IMR-90 (cell line): ENCODE measurements at regions of chrX and their contacts with region 1.

Region 1: GRCh38 chrX:49043220-49043986 is at the start of gene TFE3:
- DNase-seq: peak; percentile 98
- ATAC-seq: peak; percentile 83
- H3K4me3 ChIP-seq: peak within 1 kb of the TSS; percentile 60
- H3K27ac ChIP-seq: peak within 1 kb of the TSS; percentile 98
- H3K4me1 ChIP-seq: peaks cover 12% of the 10 kb centered on the region
- H3K27me3 ChIP-seq: no peaks in the 10 kb centered on the region
- CTCF ChIP-seq: peak; percentile 76
- POLR2A ChIP-seq: peak; percentile 65; the same call in 1 of the 2 replicates
- RAD21 ChIP-seq: peak; percentile 69
- total RNA-seq, gene TFE3: 23.9 and 24.4 TPM in 2 replicates

Region 2: GRCh38 chrX:48835524-48836329 is 207.7 kb before region 1 on chrX and contains the start of gene PCSK1N:
- CTCF ChIA-PET with region 1: no interaction called
- POLR2A ChIA-PET with region 1: no interaction called
- dilution Hi-C with region 1: no loop called
- in situ Hi-C with region 1: no loop called
- intact Hi-C with region 1: no loop called
- DNase-seq: no peak
- ATAC-seq: no peak
- H3K4me3 ChIP-seq: no peak within 1 kb of the TSS
- H3K27ac ChIP-seq: no peak within 1 kb of the TSS
- H3K4me1 ChIP-seq: no peaks in the 10 kb centered on the region
- H3K27me3 ChIP-seq: peaks cover 34% of the 10 kb centered on the region
- CTCF ChIP-seq: no peak
- POLR2A ChIP-seq: no peak
- RAD21 ChIP-seq: no peak
- total RNA-seq, gene PCSK1N: not detected in 2 replicates

Region 3: GRCh38 chrX:48917139-48918001 is 126.0 kb before region 1 on chrX:
- CTCF ChIA-PET with region 1: interaction called, 3 read pairs
- POLR2A ChIA-PET with region 1: no interaction called
- dilution Hi-C with region 1: no loop called
- in situ Hi-C with region 1: no loop called
- intact Hi-C with region 1: loop called (anchors 5 kb)
- DNase-seq: peak; percentile 85
- ATAC-seq: peak; percentile 70
- H3K4me3 ChIP-seq: no peak overlapping the region
- H3K27ac ChIP-seq: no peak overlapping the region
- H3K4me1 ChIP-seq: peaks cover 3% of the 10 kb centered on the region; the same call in 1 of the 2 replicates
- H3K27me3 ChIP-seq: no peaks in the 10 kb centered on the region
- CTCF ChIP-seq: peak; percentile 91
- POLR2A ChIP-seq: no peak
- RAD21 ChIP-seq: peak; percentile 46

Region 4: GRCh38 chrX:48957827-48958634 is 85.4 kb before region 1 on chrX:
- CTCF ChIA-PET with region 1: interaction called, 3 read pairs
- POLR2A ChIA-PET with region 1: interaction called, 13 read pairs
- dilution Hi-C with region 1: no loop called
- in situ Hi-C with region 1: no loop called
- intact Hi-C with region 1: loop called (anchors 1 kb)
- DNase-seq: peak; percentile 98
- ATAC-seq: peak; percentile 89
- H3K4me3 ChIP-seq: peak overlapping the region; percentile 78
- H3K27ac ChIP-seq: peak overlapping the region; percentile 89
- H3K4me1 ChIP-seq: peaks cover 2% of the 10 kb centered on the region
- H3K27me3 ChIP-seq: no peaks in the 10 kb centered on the region
- CTCF ChIP-seq: no peak
- POLR2A ChIP-seq: peak; percentile 92
- RAD21 ChIP-seq: no peak

Region 5: GRCh38 chrX:48972220-48973167 is 70.9 kb before region 1 on chrX:
- CTCF ChIA-PET with region 1: no interaction called
- POLR2A ChIA-PET with region 1: no interaction called
- dilution Hi-C with region 1: no loop called
- in situ Hi-C with region 1: no loop called
- intact Hi-C with region 1: loop called (anchors 1 kb)
- DNase-seq: peak; percentile 41
- ATAC-seq: peak; percentile 65
- H3K4me3 ChIP-seq: peak overlapping the region; percentile 50
- H3K27ac ChIP-seq: 0 out of 2 replicates have a peak overlapping the region, but pooled peaks have one; percentile 5
- H3K4me1 ChIP-seq: peaks cover 4% of the 10 kb centered on the region; the same call in 1 of the 2 replicates
- H3K27me3 ChIP-seq: no peaks in the 10 kb centered on the region
- CTCF ChIP-seq: peak; percentile 48
- POLR2A ChIP-seq: no peak
- RAD21 ChIP-seq: 0 out of 2 replicates have a peak, but pooled peaks have one; percentile 21

Region 6: DNA sequence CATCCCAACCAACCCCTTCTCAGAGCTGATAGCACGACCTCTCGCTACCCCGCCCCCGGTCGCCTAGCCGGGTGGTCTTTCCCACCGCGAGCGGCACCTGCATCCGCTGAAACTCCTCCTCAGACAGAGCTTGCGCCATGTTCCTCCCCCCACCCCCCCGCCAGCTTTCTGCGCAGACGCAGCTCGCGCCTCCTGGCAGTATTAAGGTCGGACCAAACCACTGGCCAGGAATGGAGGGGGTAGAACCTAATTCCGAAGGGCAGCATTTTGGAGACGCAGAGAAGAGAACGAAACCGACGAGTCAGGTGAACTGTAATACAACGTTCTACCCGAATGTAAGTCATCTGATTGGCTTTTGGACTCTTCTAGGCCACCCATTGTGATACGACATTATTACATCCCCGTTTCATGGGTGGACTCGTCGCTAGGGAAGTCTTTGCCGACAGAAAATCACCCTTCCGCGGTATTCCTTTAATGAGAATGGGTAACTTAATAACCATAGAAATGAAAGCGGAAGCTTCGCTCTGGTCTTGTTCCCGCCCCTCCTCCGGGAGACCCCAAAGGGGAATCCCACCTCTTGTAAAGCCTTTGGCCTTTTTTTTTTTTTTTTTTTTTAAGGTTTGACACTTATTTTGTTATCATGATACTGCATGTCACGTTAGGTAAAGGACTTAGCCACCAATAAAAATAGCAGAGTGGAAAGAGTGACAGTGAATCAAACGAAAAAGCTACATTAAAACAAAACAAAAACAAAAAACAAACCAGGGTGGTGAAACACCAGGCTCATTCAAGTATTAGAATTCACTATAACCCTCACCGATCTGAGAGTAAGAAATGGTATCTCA is 41.1 kb before region 1 on chrX and contains the start of gene GRIPAP1:
- CTCF ChIA-PET with region 1: no interaction called
- POLR2A ChIA-PET with region 1: interaction called, 3 read pairs
- dilution Hi-C with region 1: no loop called
- in situ Hi-C with region 1: no loop called
- intact Hi-C with region 1: loop called (anchors 1 kb)
- DNase-seq: peak; percentile 87
- ATAC-seq: peak; percentile 96
- H3K4me3 ChIP-seq: peak within 1 kb of the TSS; percentile 94
- H3K27ac ChIP-seq: peak within 1 kb of the TSS; percentile 99
- H3K4me1 ChIP-seq: no peaks in the 10 kb centered on the region; the same call in 1 of the 2 replicates
- H3K27me3 ChIP-seq: no peaks in the 10 kb centered on the region
- CTCF ChIP-seq: no peak
- POLR2A ChIP-seq: peak; percentile 34; the same call in 1 of the 2 replicates
- RAD21 ChIP-seq: no peak
- total RNA-seq, gene GRIPAP1: 17.9 and 20.8 TPM in 2 replicates

Region 7: DNA sequence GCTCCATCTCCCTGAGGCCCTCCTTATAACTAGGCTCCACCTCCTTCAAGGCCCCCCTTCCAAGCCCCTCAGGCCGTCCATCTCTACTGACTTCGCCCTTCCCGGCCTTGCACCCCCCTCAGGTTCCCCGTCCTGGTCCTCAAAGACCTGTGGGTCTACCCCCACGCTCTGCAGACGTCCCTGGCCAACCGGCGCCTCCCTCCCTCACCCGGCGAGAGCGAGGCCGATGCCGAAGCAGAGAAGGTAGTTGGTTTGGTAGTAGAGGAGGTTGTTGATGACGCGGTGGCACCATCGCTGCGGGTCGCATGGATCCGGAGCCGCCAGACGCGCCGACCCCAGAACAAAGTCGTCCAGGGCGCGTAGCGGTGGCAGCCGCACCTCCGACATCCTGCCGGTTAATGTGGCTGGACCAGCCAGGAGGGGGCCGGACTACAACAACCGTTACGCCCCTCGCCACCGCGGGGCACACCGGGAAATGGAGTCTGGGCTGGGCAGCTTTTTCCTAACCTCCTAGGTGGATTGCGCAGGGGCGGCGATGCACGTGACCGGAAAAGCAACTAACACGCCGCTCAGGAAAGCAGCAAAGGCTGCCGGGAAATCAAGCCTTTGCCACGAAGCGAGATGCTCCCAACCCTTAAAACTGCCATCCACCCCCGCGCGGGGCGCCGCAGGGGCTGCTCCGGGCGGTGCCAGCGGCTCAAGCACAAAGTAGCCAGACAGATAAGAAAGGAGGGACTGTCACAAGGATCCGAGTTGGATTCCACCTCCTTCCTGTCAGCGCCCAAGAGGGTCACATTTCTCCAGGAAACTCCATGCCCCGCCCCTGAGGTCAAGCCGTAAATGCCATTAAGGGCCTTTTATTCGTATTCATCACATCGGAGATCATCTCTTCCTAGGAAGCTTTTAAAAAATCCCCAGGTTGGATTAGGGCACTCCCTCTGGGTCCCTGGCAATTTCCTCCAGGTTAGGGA is 30.5 kb after region 1 on chrX and contains the start of gene PRAF2:
- CTCF ChIA-PET with region 1: no interaction called
- POLR2A ChIA-PET with region 1: no interaction called
- dilution Hi-C with region 1: no loop called
- in situ Hi-C with region 1: no loop called
- intact Hi-C with region 1: loop called (anchors 1 kb)
- DNase-seq: peak; percentile 89
- ATAC-seq: peak; percentile 89
- H3K4me3 ChIP-seq: peak within 1 kb of the TSS; percentile 85
- H3K27ac ChIP-seq: peak within 1 kb of the TSS; percentile 77
- H3K4me1 ChIP-seq: peaks cover under 1% of the 10 kb centered on the region; the same call in 1 of the 2 replicates
- H3K27me3 ChIP-seq: no peaks in the 10 kb centered on the region
- CTCF ChIP-seq: no peak
- POLR2A ChIP-seq: peak; percentile 75; the same call in 1 of the 2 replicates
- RAD21 ChIP-seq: no peak
- total RNA-seq, gene PRAF2: 3.8 and 5.0 TPM in 2 replicates

Region 8: GRCh38 chrX:49163555-49164419 is 120.4 kb after region 1 on chrX:
- CTCF ChIA-PET with region 1: no interaction called
- POLR2A ChIA-PET with region 1: no interaction called
- dilution Hi-C with region 1: no loop called
- in situ Hi-C with region 1: no loop called
- intact Hi-C with region 1: loop called (anchors 1 kb)
- DNase-seq: peak; percentile 73
- ATAC-seq: peak; percentile 80
- H3K4me3 ChIP-seq: peak overlapping the region; percentile 46
- H3K27ac ChIP-seq: peak overlapping the region; percentile 93
- H3K4me1 ChIP-seq: peaks cover 9% of the 10 kb centered on the region
- H3K27me3 ChIP-seq: no peaks in the 10 kb centered on the region; the same call in 1 of the 2 replicates
- CTCF ChIP-seq: peak; percentile 75
- POLR2A ChIP-seq: no peak
- RAD21 ChIP-seq: peak; percentile 45